Astrocyte of the spinal cord (primary cell): ENCODE measurements at regions of chr1 and their contacts with region 1.

Region 1: DNA sequence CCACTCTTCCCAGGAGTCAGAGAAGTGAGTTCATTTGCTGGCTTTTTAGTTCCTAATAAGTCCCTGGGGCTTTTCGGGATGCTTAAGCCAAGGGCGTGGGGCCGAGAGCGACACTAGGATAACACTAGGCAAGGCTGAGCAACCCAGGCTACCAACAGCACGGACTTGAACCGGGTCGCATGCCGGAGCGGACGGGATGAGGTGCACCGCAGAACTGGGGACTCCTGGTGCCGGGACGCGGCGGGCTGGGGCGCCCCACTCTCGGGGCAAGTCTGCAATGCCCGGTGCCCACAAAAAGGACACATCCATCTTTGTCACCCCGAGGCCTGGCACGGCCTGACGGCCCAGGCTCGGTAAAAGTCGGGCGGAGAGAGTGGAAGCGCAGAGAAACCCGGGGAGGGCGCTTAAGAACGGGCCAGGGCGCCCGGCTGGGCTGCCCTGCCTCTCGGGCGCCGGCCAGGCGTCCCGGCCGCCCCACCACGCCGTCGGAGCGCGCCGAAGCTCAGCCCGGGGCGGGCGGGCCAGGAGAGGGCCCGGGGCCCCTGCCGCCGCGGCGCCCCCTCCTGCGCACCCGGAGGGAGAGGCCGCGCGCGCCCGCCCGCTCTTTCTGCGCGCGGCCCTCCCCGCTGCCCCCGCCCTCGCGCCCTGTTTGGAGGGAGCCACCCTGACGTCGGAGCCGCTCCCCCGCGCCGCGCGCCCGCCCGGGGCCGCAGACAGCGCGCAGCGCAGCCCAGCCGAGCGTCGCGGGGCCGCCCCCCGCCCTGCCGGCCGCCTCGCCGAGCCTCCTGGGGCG is at the start of gene NBL1:
- DNase-seq: peak; percentile 74
- H3K4me3 ChIP-seq: peak within 1 kb of the TSS; percentile 65
- CTCF ChIP-seq: no peak

Region 2: DNA sequence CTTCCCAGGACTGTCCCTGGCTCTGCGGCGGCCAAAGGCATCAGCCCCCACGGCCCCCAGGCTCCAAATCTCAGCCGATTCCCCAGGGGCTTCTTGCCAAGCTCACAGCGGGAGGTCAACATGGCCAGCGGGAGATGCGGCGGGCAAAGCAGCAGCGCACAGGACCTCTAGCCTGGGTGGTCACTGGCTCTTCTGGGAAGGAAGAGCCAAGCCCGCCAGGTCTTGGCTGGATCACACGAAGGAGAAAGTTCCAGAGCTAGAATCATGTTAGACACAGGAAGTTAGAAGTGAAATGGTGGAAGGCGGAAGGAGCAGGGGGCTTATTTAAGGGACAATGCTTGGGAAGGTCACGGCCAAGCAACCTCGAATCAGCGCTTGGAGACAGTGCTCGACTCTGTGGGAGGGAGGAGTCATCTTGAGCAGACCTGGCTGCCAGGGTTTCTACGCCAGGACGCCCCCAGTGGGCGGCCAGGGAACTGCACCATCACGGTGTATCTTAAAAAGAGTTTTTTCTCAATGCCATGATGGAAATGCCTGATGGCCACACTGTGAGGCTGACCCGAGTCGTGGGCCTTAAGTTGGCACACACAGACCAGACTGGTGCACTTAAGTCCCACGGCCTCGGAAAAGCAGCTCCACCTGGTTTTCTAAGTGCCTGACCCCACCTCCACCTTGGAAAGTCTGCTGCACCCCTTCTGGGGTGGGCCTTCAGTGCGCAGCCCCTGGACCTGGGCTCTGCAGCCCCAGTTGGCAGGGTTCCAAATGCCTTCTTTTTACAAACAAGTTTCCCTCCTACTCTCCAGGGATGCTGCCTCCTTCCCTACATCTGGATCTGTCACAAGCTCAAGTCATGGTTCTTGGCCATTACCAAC is 302.4 kb before region 1 on chr1:
- in situ Hi-C with region 1: loop called (anchors 25 kb)
- DNase-seq: peak; percentile 78
- H3K4me3 ChIP-seq: no peak overlapping the region
- CTCF ChIP-seq: peak; percentile 94

Region 3: DNA sequence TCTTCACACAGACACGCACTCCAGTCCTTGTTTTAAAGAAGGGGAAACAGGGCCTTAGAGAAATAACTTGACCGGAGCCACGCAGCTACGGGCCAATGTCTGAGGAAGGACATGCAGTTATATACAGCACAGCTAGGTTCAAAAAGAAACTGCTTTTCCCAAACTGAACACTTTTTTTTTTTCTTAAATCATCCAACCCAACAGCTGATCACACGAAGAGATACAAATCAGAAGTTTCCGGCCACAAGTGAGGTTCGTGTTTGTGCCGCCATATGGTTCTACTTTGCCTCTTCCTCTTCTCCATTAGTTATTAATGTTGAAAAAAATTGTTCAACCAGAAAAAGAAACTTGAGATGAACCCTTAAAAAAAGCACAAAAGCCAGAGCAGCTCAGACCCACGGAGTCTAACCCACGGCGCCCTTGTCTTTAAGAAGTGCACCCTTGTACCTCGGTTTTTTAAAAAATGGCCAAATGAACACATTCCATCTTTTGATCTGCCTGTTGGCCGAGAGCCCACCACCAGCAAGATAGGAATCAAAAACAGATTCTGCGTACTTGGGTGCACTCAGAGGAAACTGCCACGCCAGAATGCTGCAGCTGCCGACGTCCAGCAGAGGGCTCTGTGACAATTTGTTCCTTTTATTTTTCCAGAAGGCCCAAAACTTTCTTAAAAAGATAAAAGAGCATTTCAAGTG is 252.8 kb before region 1 on chr1:
- in situ Hi-C with region 1: no loop called
- DNase-seq: peak; percentile 93
- H3K4me3 ChIP-seq: no peak overlapping the region
- CTCF ChIP-seq: peak; percentile 91

Region 4: DNA sequence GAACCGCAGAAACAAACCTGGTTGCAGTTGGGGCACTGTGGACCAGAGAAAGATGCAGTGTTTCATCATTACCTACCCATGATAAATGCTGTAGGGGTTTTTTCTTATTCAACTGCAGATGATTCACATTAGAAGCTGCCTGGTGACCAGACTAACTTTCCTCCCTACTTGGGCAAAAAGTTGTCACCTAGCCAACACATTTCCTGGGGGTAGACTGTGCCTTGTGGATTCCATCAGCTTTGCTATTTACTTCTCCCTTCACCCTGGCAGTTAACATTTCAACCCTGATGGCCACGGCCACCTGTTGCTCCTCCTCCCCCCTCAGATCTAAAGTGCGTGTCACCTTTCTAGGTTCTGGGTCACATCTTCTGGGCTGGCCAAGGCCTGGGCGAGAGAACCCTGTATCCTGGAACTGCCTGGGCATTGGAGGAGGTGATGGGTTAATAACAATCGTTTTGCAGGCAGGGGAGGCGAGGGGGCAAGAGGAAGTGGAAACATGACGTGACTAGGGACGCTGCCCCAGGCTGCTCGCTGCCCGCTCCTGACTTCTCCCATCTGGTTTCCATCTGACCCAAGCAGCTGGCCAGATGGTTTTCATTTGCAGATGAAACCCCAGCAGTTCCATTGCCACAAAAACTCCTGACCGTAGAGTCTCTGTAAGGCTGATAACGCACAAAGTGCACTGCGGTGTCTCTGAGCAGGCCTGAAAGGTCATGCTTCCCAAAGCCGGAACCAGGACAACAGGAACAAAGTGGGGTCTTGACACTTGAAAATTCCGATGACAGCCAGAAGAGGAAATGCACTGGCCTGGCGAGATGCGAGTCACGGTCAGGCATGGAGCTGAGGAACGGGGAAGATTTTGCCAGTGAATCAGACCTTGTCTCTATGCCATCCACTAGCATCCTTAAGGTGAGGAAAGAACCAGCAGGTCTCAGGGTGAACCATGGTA is 195.0 kb before region 1 on chr1:
- in situ Hi-C with region 1: loop called (anchors 25 kb)
- DNase-seq: peak; percentile 88
- H3K4me3 ChIP-seq: no peak overlapping the region
- CTCF ChIP-seq: no peak